Activated CD4-positive, alpha-beta memory T cell treated with anti-CD3 and anti-CD28 coated beads for 36 hours (primary cell): ENCODE measurements at regions of chr17 and their contacts with region 1.

Region 1: DNA sequence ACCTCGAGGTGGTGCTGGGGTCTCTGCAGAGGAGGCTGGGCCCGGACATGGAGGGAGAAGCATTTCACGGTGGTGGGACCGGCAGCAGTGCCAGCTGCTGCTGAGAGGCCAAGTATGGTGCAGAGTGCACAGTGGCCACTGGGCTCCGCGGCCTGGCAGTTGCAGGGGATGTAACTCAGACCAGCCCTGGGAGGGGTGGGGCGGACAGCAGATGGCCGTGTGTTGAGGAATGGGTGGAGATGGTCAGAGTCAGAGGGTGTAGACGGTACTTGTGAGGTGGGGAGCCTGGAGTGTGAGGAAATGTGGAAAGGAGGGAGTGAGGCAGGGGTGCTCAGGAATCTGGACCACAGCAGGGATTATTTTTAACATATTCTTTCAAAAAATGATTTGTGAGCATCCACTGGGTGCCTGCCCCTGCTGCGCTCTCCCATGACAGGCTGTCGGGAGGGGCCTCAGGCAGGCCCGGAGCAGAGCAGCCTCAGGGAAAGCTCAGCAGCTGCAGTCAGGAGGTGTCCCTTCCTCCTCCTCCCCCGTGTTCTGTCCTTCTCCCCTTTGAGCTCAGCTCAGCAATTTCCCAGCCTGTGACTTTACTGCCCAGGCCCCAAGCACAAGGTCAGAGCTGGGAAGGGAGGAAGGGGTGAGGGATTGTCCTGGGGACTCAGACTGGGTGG is 113.1 kb downstream of the RAP1GAP2 start:
- DNase-seq: no peak
- H3K4me3 Mint-ChIP-seq: no peak overlapping the region
- H3K27ac Mint-ChIP-seq: no peak overlapping the region
- H3K4me1 Mint-ChIP-seq: peaks cover 27% of the 10 kb centered on the region
- H3K27me3 Mint-ChIP-seq: no peaks in the 10 kb centered on the region

Region 2: DNA sequence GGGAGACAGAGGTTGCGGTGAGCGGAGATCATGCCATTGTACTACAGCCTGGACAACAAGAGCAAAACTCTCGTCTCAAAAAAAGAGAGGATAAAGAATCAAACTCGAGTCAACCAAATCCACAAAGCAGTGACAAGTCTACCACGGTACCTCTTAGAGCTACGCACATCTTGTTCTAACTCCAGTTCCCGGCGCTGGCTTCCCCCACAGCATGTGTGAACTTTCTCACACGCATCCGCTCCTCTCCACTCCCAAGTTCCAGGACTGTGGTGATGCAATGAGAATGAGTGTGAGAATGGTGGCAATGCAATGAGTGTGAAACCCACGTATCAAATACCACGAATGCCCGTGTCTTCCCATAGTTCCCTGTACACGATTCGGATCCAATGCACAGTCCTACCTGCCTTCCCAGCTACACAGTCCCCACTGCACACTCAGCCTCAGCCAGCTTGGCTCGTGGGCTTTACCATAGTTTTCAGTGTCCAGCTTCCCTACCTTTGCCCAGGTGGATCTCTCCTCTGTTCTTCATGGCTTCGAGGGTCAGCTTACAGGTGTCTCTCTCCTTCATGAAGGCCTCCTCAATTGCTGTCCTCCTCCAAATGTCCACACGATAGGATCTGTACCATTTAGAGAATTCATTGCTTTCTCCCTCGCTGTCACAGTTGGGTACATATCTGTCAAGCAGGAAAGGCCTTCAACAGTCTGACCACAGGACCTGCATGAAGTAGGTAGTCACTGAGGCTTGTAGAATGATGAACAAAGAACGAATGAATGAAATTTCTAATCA is 795.8 kb after region 1 on chr17:
- CTCF ChIA-PET with region 1: no interaction called
- POLR2A ChIA-PET with region 1: no interaction called
- intact Hi-C with region 1: loop called (anchors 5 kb)
- DNase-seq: no peak
- H3K4me3 Mint-ChIP-seq: no peak overlapping the region
- H3K27ac Mint-ChIP-seq: no peak overlapping the region
- H3K4me1 Mint-ChIP-seq: peaks cover 17% of the 10 kb centered on the region
- H3K27me3 Mint-ChIP-seq: no peaks in the 10 kb centered on the region